Ascending aorta (tissue), 2 donors: ENCODE measurements at regions of chr9 and their contacts with region 1.

Region 1: DNA sequence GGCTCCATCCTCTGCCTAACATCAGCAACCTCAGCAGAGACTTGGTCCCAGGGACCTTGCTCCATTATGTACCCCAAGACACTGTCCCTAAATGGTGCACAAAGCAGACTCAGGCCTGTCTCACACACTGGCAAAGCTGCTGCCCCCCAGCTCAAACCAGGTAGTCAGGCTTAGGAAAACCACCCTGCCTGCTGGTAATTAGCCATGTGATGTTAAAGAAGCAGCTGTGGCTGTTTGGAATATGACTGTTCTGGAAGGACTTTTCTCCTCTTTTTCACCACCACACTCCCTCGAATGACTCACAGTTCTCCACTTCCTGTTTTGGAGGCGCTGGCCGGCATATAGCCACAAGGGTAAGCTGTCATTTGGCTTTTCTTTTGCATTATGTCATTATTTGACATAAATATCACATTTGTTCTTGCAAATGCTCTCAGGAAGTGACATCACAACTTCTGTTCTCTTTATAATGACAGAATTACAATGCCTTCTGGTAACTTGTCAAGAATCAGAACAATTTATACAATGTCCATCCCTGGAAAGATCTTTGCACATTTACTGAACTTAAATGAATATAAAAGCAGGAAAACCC is 113.9 kb downstream of the SUSD1 start:
- DNase-seq: peak; percentile 66 to 89
- H3K4me3 ChIP-seq: no peak overlapping the region
- H3K27ac ChIP-seq: peak overlapping the region; percentile 81 to 83
- H3K4me1 ChIP-seq: peaks cover 4 to 12% of the 10 kb centered on the region in 2 donors
- H3K27me3 ChIP-seq: no peaks in the 10 kb centered on the region
- CTCF ChIP-seq: no peak

Region 2: GRCh38 chr9:111902396-111903147 is 158.7 kb before region 1 on chr9:
- intact Hi-C with region 1: loop called (anchors 5 kb)
- DNase-seq: no peak
- H3K4me3 ChIP-seq: no peak overlapping the region
- H3K27ac ChIP-seq: peak overlapping the region in 1 of 2 donors; percentile 11
- H3K4me1 ChIP-seq: peaks cover 0 to 41% of the 10 kb centered on the region in 2 donors
- H3K27me3 ChIP-seq: no peaks in the 10 kb centered on the region
- CTCF ChIP-seq: no peak

Region 3: DNA sequence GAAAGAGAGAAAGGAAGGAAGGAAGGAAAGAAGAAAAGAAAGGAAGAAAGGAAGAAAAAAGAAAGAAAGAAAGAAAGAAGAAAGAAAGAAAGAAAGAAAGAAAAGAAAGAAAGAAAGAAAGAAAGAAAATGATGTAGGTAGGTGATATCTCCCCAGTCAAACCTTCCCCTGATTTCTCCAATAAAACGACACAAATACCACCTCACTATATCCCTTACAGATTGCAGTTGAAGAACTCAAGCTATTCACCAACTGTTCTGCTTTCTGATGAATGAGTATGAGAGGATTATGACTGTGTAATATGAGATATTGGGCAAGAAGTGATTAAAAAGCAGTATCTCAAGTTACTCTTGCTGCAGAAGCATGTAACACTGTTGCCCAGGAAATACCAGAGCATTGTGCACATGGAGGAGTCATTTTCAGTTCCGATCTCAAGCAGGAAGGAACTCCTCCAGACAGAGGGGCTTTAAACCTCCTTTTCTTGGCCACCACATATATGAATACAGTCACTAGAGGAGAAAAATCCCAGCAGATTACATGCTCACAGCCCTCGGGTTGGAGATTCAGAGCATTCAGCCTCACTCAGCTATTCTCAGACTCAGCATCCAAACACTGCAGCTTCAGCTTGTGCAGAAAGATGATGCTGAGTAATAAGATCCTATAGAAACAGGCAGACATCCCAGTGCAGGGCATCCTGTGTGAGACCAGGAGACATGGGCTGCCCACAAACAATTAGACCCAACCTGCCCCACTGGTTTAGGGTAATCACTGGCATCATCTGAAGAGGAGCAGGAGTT is 103.2 kb before region 1 on chr9:
- intact Hi-C with region 1: loop called (anchors 10 kb)
- DNase-seq: peak in 1 of 2 donors; percentile 69
- H3K4me3 ChIP-seq: peak overlapping the region in 1 of 2 donors; percentile 36
- H3K27ac ChIP-seq: peak overlapping the region in 1 of 2 donors; percentile 45
- H3K4me1 ChIP-seq: peaks cover 4 to 6% of the 10 kb centered on the region in 2 donors
- H3K27me3 ChIP-seq: no peaks in the 10 kb centered on the region
- CTCF ChIP-seq: no peak

Region 4: DNA sequence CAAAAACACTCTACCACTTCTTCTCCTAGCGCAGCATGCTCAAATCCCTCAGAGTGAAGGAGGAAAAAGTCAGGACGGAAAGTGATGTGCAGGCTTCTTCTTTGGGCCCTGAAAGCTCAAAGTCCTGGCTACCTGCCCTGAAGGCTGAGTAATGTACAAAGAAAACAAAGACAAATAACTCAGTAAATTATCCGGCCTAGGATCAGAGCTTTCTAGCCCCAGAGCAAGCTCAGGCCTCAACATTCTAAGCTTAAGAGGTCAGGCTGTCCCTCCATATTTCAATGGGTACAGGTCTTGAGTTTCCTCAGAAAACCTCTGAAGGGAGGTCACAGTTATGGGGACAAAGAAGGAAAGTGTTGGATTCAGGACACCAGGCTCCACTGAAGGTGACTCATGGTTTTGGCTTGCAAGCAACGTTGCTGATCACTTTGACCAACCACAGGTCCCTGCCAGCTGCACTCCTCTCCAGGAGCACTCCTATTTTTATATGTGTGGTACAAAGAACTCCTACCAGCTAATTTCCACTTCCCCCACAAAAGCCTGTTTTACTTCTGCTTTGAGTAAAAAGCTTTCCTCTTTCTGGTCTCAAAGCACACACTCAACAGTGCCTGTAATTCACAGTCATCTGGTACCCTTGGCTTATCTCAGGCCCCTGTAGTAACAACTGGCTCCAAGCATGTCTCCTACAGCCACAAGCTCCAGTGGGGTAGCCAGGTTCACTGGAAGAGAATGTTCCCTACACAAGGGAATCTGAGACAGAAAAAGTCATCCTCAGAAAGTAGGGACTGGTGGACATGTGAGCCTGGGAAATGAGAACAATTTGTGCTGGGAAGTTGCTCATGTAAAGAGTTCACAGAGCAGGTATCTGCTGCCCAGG is 49.0 kb before region 1 on chr9:
- intact Hi-C with region 1: loop called (anchors 5 kb)
- DNase-seq: peak in 1 of 2 donors; percentile 86
- H3K4me3 ChIP-seq: no peak overlapping the region
- H3K27ac ChIP-seq: peak overlapping the region; percentile 71 to 89
- H3K4me1 ChIP-seq: peaks cover 2 to 16% of the 10 kb centered on the region in 2 donors
- H3K27me3 ChIP-seq: no peaks in the 10 kb centered on the region
- CTCF ChIP-seq: no peak

Region 5: GRCh38 chr9:112112941-112113681 is 51.9 kb after region 1 on chr9:
- intact Hi-C with region 1: no loop called
- DNase-seq: no peak
- H3K4me3 ChIP-seq: no peak overlapping the region
- H3K27ac ChIP-seq: no peak overlapping the region
- H3K4me1 ChIP-seq: no peaks in the 10 kb centered on the region
- H3K27me3 ChIP-seq: no peaks in the 10 kb centered on the region
- CTCF ChIP-seq: peak in 2 of 3 experiments; percentile 14 to 22

Region 6: GRCh38 chr9:112166172-112167140 is 105.2 kb after region 1 on chr9:
- intact Hi-C with region 1: no loop called
- DNase-seq: no peak
- H3K4me3 ChIP-seq: no peak overlapping the region
- H3K27ac ChIP-seq: peak overlapping the region; percentile 13 to 20
- H3K4me1 ChIP-seq: no peaks in the 10 kb centered on the region
- H3K27me3 ChIP-seq: no peaks in the 10 kb centered on the region
- CTCF ChIP-seq: peak; percentile 9 to 58 (median 42)